Activated CD4-positive, alpha-beta T cell treated with anti-CD3 and anti-CD28 coated beads, Interleukin-2, amount 10 ng/mL, durations not matched to agents 24 days and 14 days (primary cell): ENCODE measurements at regions of chr17 and their contacts with region 1.

Region 1: DNA sequence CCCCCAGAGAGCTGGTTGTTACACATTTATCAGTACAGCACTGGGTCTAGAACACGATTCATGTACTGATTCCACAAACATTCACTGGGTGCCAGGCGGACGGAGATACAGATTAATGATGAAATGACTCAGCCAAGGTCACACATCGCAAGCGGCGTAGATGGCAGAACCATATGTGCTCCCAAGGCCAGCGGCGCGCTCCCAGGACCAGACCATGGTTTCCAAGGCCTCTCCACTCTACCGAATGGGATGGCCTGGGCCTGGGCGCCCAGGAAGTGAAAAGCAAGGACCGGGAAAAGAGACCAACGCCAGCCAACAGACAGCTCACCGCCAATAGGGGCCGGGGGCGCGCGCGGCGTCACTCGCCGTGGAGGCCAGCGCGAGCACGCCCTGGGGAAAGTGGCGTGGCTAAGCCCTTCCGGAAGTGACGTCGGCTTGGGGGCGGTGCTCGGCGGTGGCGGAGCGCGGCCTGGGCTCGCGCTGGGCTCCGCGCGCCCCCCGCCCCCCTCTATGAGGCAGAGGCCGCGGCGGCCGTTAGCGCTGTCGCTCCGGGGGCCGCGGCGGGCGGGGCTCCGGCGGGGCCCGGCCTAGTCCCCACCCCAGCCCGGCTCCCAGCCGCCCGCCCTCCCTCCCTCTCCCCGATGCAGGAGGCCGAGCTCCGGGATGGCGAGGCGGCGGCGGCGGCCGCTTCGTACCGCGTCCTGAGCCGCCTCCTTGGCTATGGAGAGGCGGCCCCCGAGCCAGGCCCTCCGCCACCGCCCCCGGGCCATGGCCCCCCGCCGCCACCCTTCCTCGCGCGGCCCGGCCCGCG is at the start of gene SOCS7:
- DNase-seq: peak; percentile 98
- H3K4me3 Mint-ChIP-seq: peak within 1 kb of the TSS; percentile 89
- H3K27ac Mint-ChIP-seq: peak within 1 kb of the TSS; percentile 95
- H3K4me1 Mint-ChIP-seq: peaks cover 37% of the 10 kb centered on the region
- H3K27me3 Mint-ChIP-seq: no peaks in the 10 kb centered on the region
- total RNA-seq, gene SOCS7: 31.2 and 31.4 TPM in 2 replicates

Region 2: GRCh38 chr17:38415250-38416194 is 63.9 kb after region 1 on chr17:
- intact Hi-C with region 1: loop called (anchors 1 kb)
- DNase-seq: peak; percentile 64
- H3K4me3 Mint-ChIP-seq: peak overlapping the region; percentile 68
- H3K27ac Mint-ChIP-seq: peak overlapping the region; percentile 82
- H3K4me1 Mint-ChIP-seq: peaks cover 9% of the 10 kb centered on the region
- H3K27me3 Mint-ChIP-seq: peaks cover 26% of the 10 kb centered on the region

Region 3: DNA sequence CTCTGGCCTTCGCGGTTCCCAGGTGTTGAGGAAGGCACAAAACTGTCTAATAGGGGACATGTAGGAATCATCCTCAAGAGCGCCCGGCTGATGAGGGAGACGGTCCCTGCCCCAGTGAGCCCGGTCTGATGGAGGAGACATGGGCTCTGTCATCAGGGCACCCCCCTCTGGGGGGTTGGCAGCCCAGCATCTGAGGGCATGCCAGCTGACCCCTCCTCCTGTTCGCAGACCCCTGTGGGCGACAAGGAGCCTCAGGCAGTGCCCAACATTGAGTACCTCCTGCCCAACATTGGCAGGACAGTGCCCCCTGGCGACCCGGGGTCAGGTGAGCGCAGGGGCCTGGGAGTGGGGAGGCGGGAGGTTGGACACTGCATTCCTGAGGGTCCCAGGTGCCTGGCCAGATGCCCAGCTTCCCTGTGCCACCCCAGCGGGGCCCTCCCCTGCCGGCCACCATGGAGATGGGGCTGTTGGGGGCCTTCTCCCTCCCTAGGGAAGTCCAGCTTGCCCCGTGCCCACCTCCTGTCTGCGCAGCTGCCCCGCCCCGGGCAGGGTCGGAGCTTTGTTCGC is 146.7 kb after region 1 on chr17:
- intact Hi-C with region 1: loop called (anchors 10 kb)
- DNase-seq: no peak
- H3K4me3 Mint-ChIP-seq: no peak overlapping the region
- H3K27ac Mint-ChIP-seq: no peak overlapping the region
- H3K4me1 Mint-ChIP-seq: no peaks in the 10 kb centered on the region
- H3K27me3 Mint-ChIP-seq: no peaks in the 10 kb centered on the region